ENCODE measurements at regions of chr2 and their contacts with region 1.

Region 1: GRCh38 chr2:177164584-177165052 is 48.0 kb upstream of the HNRNPA3 start:
- DNase-seq: peak; percentile 77 to 81 (median 77)
- H3K4me3 ChIP-seq: peak overlapping the region in 6 of 7 experiments; percentile 47 to 83 (median 70)
- H3K27ac ChIP-seq: peak overlapping the region; percentile 76 to 92
- H3K4me1 ChIP-seq: peaks cover 10 to 29% (median 23%) of the 10 kb centered on the region in 4 experiments
- H3K27me3 ChIP-seq: no peaks in the 10 kb centered on the region

Region 2: DNA sequence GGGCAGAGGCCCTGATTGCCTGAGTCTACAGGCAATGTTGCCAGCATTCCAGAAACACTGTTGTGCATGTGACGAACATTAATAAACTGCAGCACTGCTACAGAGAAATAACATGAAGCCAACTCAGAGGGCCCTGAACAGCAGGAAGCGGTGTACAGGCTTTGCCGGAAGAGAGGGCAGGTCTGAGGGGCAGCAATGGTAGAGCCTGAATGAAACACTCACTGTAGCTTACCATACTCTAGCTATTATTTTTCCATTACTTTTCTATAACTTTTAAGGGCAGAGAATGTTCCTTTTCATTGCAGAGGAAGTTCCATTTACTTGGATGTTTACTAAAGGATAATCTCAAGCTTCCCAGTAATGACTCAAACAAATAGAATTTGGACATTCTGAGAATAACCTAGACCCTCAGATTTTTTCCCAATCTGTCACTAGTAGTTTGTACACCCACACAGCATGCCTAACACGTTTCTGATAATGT is 745.0 kb before region 1 on chr2:
- CTCF ChIA-PET with region 1: no interaction called
- POLR2A ChIA-PET with region 1: no interaction called
- DNase-seq: no peak
- H3K4me3 ChIP-seq: no peak overlapping the region
- H3K27ac ChIP-seq: no peak overlapping the region
- H3K4me1 ChIP-seq: no peaks in the 10 kb centered on the region
- H3K27me3 ChIP-seq: peaks cover 0 to 3% (median 0%) of the 10 kb centered on the region in 5 experiments

Region 3: GRCh38 chr2:177175917-177176668 is 11.5 kb after region 1 on chr2:
- CTCF ChIA-PET with region 1: interaction called, 11 read pairs
- POLR2A ChIA-PET with region 1: no interaction called
- DNase-seq: no peak
- H3K4me3 ChIP-seq: no peak overlapping the region
- H3K27ac ChIP-seq: no peak overlapping the region
- H3K4me1 ChIP-seq: peaks cover 0 to 3% (median 0%) of the 10 kb centered on the region in 4 experiments
- H3K27me3 ChIP-seq: no peaks in the 10 kb centered on the region

Region 4: GRCh38 chr2:177195194-177195593 is 30.6 kb after region 1 on chr2:
- CTCF ChIA-PET with region 1: interaction called, 60 read pairs
- POLR2A ChIA-PET with region 1: no interaction called
- DNase-seq: peak in 1 of 3 donors; percentile 7
- H3K4me3 ChIP-seq: no peak overlapping the region
- H3K27ac ChIP-seq: no peak overlapping the region
- H3K4me1 ChIP-seq: no peaks in the 10 kb centered on the region
- H3K27me3 ChIP-seq: no peaks in the 10 kb centered on the region

Region 5: GRCh38 chr2:177289824-177290628 is 125.4 kb after region 1 on chr2:
- CTCF ChIA-PET with region 1: interaction called, 17 read pairs
- POLR2A ChIA-PET with region 1: no interaction called
- DNase-seq: peak in 2 of 3 donors; percentile 51 to 58
- H3K4me3 ChIP-seq: peak overlapping the region in 2 of 7 experiments; percentile 26 to 28
- H3K27ac ChIP-seq: no peak overlapping the region
- H3K4me1 ChIP-seq: peaks cover 0 to 23% (median 7%) of the 10 kb centered on the region in 4 experiments
- H3K27me3 ChIP-seq: no peaks in the 10 kb centered on the region

Region 6: DNA sequence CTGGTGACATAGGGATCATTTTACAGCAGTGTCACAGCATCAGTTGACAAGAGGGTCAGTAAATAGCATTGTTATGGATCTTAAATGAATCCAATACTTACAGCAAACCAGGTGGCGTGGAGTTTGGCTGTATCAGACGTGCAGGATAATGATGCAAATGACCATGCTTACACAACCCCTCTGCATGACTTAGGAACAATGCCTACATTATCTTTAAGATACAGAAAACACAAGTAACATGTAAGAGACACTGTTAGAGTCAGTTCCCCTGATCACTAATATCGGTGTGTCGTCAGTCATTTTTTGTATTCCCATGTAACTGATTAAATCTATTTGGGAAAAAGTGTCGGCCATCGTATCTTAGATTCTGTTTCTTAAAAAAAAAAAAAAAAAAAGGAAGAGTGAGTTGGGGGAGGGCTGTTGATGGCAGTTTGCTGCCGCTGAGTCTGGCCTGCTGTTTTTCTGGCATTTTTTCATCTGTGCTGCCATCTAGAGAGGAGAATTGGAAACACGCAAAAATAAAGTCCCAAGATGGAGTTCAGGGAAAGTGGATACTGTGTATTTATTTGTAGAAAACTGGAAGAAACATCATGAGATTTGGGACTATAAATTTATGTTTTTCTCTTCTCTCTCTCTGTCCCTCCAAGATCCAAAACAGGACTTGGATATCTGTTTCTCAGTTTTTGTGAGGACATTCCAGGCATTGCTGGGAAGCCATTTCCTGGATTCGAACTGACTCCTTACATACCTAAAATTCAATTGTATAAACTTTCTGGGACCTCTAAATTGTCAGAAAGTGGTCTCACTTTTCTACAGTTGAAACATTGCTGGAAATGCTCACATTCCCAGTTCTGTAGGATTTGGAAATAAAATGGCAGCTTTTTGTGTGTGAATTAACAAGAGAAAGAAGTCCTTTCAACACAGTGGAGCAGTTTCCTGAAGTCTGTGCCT is 167.7 kb after region 1 on chr2:
- CTCF ChIA-PET with region 1: interaction called, 42 read pairs
- POLR2A ChIA-PET with region 1: no interaction called
- DNase-seq: peak; percentile 82 to 89 (median 87)
- H3K4me3 ChIP-seq: peak overlapping the region in 2 of 7 experiments; percentile 52 to 68
- H3K27ac ChIP-seq: peak overlapping the region in 1 of 2 experiments; percentile 43
- H3K4me1 ChIP-seq: peaks cover under 1 to 17% (median 12%) of the 10 kb centered on the region in 4 experiments
- H3K27me3 ChIP-seq: no peaks in the 10 kb centered on the region

Measured in common myeloid progenitor, CD34-positive (primary cell).